Left cardiac atrium (tissue), 4 donors: ENCODE measurements at regions of chr2 and their contacts with region 1.

Region 1: DNA sequence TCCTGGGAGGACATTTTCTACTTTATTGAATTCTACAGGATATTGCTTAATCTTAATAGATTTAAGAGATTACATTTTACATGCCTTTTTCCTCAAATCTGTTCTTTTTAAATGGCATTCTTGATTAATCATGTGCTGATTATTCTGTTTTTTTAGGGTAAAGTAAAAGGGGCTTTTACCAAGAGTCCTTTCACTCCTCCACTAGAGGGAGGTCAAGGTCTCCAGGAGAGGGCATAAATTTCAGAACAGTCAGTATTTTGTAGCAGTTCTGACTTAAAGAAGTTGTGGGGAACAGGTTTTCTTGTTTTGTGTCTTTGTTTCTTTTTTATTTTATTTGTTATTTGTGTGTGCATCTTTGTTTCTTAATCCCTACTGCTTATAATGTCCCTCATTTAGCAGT is 25.4 kb downstream of the WDR75 start:
- DNase-seq: no peak
- ATAC-seq: peak; percentile 57 to 61

Region 2: GRCh38 chr2:189276277-189276676 is 190.4 kb before region 1 on chr2:
- intact Hi-C with region 1: no loop called
- DNase-seq: no peak
- ATAC-seq: no peak

Region 3: DNA sequence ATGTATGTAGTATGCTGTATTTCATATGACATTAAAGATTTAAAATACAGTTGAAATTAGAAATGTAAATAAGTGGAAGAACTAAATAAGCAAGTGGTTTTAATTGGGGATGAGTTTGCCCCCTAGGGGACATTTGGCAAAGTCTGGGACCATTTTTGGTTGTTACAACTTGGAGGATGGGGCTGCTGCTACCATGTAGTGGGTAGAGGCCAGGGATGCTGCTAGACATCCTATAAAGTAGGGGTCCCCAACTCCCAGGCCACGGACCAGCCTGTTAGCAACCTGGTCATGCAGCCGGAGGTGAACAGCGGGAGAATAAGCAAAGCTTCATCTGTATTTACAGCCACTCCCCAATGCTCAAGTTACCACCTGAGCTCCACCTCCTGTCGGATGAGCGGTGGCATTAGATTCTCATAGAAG is 166.7 kb after region 1 on chr2:
- intact Hi-C with region 1: loop called in 1 of 2 experiments (anchors 5 kb)
- DNase-seq: no peak
- ATAC-seq: peak in 1 of 2 donors; percentile 33

Region 4: DNA sequence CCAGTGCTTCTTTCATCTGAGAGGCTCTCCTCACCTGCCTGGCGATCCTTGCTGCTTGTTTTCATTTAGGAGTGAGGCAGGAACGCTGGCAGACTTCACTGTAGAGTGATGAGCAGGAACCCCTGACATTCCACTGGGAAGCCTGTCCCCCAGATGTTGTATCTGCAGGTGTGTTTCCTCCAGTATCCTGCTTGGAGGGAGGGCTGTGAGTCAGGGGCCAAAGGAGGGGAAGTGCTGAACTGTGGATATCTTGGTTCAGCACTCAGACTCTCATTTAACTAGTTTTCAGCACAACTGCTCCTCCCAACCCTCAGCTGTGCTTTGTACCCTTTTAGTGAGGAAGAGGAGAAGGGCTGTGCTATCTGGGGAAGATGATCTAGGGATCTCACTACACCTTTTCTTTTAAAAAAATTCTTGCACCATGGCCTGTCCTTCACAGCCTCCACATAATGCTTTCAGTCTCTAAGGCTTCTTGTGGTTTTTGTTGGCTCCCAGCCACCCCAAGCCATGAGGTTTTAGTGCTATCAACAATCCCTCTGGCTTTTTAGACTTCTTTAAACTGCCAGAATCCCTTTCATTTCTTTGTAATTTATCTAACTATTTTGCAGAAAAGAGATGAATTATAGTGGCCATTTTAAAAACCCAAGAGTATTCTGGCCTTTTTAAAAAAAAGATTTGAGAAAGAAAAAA is 219.0 kb after region 1 on chr2:
- intact Hi-C with region 1: no loop called
- DNase-seq: peak; percentile 53
- ATAC-seq: peak in 1 of 2 donors; percentile 59